ENCODE measurements at regions of chr13 and their contacts with region 1.

Region 1: DNA sequence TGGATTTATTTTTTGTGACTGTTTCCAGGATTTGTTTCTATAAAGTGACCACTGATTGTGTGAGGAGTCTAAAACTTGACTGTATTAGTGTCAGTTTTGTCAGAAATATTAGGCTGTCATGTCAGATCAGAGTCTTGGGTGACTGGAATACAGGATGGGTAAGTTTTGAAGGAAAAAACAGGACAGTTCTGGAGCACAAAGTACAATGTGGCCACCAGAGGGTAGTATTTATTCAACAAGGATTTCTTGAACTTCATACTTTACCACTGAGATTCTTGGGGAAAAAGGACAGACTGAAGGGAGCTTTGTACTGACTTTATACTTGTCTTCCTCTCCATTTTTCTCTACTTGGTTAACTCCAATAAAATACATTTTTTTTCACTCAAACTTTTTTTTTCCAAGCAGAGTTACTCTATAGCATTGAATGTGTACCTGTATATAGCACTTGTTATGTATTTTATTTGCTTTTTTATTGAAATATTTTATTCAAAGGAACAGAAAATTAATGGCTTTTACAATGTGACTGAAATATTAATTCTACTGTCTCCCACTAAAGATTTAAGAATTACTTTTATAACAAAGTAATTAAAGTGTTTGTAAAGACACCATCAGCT is 51.1 kb downstream of the LMO7 start:
- DNase-seq: peak in 1 of 2 experiments; percentile 37
- H3K4me3 ChIP-seq: no peak overlapping the region
- H3K4me1 ChIP-seq: peaks cover 7% of the 10 kb centered on the region
- H3K27me3 ChIP-seq: no peaks in the 10 kb centered on the region

Region 2: DNA sequence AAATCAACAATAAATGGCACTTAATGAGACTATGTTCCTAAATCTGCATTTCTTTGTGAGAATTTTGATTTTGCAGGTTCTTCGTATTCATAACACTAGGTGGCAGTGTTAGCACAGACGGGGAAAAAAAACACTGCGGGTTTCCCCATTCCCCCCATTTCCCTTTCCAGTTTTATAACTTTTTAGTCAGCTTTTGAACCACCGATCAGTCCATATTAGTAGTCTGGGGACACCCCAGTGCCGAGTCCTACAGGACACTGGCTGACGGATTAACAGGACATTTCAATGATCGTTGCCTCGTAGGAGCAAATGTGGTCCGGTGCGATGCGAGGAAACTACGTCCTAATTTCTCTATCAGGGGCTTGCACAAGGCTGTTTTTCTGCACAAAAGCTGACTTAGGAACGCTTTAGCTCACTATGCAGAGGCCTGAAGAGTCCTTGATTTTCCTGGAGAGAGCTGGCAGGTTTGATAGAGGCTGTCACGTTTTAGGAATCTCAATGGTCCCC is 183.2 kb after region 1 on chr13:
- in situ Hi-C with region 1: loop called (anchors 25 kb)
- DNase-seq: peak in 1 of 2 experiments; percentile 23
- H3K4me3 ChIP-seq: no peak overlapping the region
- H3K4me1 ChIP-seq: peaks cover 7% of the 10 kb centered on the region
- H3K27me3 ChIP-seq: peaks cover 9% of the 10 kb centered on the region

Region 3: GRCh38 chr13:76016799-76017400 is 329.6 kb after region 1 on chr13:
- in situ Hi-C with region 1: loop called (anchors 25 kb)
- DNase-seq: peak; percentile 12 to 58
- H3K4me3 ChIP-seq: no peak overlapping the region
- H3K4me1 ChIP-seq: no peaks in the 10 kb centered on the region
- H3K27me3 ChIP-seq: peaks cover 6% of the 10 kb centered on the region; the same call in 1 of the 2 replicates

Region 4: DNA sequence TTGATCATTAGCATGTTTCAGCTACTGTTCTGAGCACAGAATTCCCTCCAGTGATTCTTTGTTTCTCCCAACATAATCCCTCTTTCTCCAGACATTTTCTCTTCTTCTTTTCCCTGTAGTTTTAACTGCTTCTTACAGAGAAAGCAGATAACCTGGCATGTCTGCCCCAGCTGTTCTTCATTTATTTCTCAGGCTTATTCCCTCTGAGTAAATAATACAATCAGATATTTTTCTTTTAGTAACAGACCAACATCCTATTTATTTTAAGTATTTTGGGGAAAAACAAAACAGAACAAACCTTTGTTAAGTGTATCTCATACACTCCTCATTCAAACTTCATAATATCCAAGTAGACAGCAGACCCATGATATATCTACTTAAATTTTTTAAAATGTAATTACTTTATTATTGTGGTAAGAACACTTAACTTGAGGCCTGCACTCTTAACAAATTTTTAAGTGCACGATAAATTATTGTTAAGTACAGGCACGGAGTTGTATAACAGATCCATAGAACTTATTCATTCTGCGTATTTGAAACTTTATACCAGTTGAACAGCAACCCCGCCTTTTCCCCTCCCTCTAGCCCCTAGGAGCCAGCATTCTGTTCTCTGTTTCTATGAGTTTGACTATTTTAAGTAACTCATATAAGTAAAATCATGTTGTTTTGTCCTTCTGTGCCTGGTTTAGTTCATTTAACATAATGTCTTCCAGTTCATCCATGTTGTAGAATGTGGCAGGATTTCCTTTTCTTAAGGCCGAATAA is 488.9 kb after region 1 on chr13:
- in situ Hi-C with region 1: no loop called
- DNase-seq: no peak
- H3K4me3 ChIP-seq: no peak overlapping the region
- H3K4me1 ChIP-seq: no peaks in the 10 kb centered on the region
- H3K27me3 ChIP-seq: no peaks in the 10 kb centered on the region

Region 5: GRCh38 chr13:76473552-76474134 is 786.4 kb after region 1 on chr13:
- in situ Hi-C with region 1: loop called (anchors 10 kb)
- DNase-seq: peak; percentile 62 to 85
- H3K4me3 ChIP-seq: no peak overlapping the region
- H3K4me1 ChIP-seq: no peaks in the 10 kb centered on the region
- H3K27me3 ChIP-seq: 0 out of 2 replicates have a peak, but pooled peaks cover 3% of the 10 kb centered on the region

Region 6: GRCh38 chr13:76903544-76904162 is 1216.4 kb after region 1 on chr13:
- in situ Hi-C with region 1: loop called (anchors 25 kb)
- DNase-seq: peak; percentile 60 to 72
- H3K4me3 ChIP-seq: no peak overlapping the region
- H3K4me1 ChIP-seq: no peaks in the 10 kb centered on the region
- H3K27me3 ChIP-seq: peaks cover 22% of the 10 kb centered on the region

Measured in HAP-1 (cell line).